ENCODE measurements at regions of chr2 and their contacts with region 1.

Region 1: GRCh38 chr2:119753041-119753929 is 6.4 kb upstream of the PTPN4 start:
- DNase-seq: no peak
- ATAC-seq: peak; percentile 46 to 79 (median 55)
- H3K4me3 ChIP-seq: no peak overlapping the region
- H3K27ac ChIP-seq: peak overlapping the region; percentile 37
- H3K4me1 ChIP-seq: peaks cover 20% of the 10 kb centered on the region
- H3K27me3 ChIP-seq: no peaks in the 10 kb centered on the region
- CTCF ChIP-seq: peak; percentile 76

Region 2: DNA sequence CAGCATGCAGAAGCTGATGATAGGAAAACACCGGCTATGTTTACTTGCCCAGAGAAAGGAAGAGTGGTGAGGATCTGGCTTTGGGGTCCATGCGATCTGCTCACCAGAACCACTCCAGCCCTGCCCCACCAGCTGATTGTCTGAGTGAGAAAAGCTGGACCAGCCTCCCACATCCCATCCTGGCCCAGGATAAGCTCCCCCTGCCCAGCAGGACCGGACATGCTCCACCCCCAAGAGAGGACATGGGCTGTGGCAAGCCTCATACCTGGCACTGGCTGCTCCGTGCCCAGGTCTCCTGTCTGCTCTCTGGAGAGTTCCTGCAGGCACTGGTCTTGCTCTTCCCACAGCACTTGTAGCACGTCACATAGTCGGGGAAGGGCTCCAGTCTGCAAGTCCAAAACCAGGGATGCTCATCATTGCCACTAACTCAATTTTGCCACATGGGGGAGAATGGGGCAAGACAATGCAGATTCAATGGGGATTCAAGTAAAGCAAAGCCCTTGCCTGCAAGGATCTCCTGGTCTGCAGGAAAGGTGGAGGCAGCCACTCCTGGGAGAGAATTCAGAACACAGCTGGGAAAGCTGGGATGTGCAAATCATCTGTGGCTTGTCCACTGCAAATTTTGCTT is 259.0 kb before region 1 on chr2:
- intact Hi-C with region 1: no loop called
- DNase-seq: no peak
- ATAC-seq: no peak
- H3K4me3 ChIP-seq: no peak overlapping the region
- H3K27ac ChIP-seq: no peak overlapping the region
- H3K4me1 ChIP-seq: peaks cover 9% of the 10 kb centered on the region
- H3K27me3 ChIP-seq: no peaks in the 10 kb centered on the region
- CTCF ChIP-seq: no peak

Region 3: GRCh38 chr2:119702918-119703401 is 50.3 kb before region 1 on chr2:
- intact Hi-C with region 1: loop called in 1 of 2 experiments (anchors 5 kb)
- DNase-seq: peak; percentile 69 to 80
- ATAC-seq: peak; percentile 96 to 99 (median 96)
- H3K4me3 ChIP-seq: no peak overlapping the region
- H3K27ac ChIP-seq: no peak overlapping the region
- H3K4me1 ChIP-seq: no peaks in the 10 kb centered on the region
- H3K27me3 ChIP-seq: no peaks in the 10 kb centered on the region
- CTCF ChIP-seq: peak; percentile 96

Region 4: DNA sequence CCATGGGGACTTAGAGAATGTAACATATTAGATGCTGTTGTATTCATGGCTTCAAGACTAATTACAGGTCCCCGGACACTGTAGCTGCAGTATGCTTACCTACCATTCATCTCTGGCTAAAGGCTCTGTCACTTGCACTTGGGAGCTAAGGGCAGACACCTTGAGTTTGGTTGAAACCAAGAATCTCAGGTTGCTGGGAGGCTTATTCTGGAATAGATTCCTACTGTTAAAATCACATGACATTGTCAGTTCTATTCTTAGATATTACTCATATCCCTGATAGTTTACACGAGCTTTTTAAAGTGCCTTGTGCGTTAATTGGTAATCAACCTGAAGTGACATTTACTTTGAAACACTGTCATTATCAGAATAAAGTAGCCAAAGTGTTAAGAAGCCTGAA is 186.6 kb after region 1 on chr2:
- intact Hi-C with region 1: loop called in 1 of 2 experiments (anchors 5 kb)
- DNase-seq: no peak
- ATAC-seq: peak; percentile 74 to 90 (median 82)
- H3K4me3 ChIP-seq: no peak overlapping the region
- H3K27ac ChIP-seq: peak overlapping the region; percentile 65
- H3K4me1 ChIP-seq: peaks cover 28% of the 10 kb centered on the region
- H3K27me3 ChIP-seq: no peaks in the 10 kb centered on the region
- CTCF ChIP-seq: no peak